ENCODE measurements at regions of chr3 and their contacts with region 1.

Region 1: DNA sequence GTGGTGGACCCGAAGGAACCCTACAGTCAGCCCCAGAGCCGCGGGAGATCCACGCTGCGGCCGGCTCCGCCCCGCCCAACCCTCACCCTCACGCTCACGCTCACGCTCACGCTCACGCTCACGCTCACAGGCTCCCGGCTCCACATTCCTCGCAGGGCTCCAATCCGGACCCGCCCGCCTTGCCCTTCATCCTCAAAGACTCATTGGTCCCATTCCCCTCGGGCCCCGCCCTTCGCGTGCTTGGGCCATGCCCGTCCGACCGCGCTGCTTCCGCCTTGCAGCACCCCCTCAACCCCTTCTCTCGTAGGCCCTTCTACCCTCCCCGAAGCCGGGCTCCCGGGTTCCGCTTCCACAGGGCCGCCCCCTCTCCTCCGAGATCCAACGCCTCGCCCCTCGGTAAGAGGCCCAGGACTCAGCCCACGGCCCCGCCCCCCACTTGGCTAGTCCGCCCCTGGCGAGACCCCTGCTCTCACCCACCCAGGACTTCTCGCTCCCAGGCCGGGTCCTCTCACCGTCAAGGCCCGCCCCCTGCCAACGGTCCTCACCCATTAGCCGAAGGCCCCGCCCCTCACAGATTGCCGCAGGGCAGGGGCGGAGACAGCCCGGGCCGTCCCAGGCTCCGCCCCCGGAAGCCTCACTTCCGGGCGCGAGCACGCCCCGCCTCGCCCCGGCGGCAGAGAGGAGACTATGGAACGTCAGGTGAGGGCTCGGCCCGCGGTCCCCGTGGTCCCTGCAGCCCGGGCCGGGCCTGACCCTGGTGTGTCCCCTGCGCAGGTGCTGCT is at the start of gene APEH:
- DNase-seq: peak; percentile 98
- ATAC-seq: peak; percentile 88
- H3K4me3 ChIP-seq: peak within 1 kb of the TSS; percentile 51 to 84 (median 73)
- H3K4me3 Mint-ChIP-seq: peak within 1 kb of the TSS; percentile 99
- H3K27ac ChIP-seq: peak within 1 kb of the TSS; percentile 86 to 94
- H3K27ac Mint-ChIP-seq: peak within 1 kb of the TSS; percentile 98
- H3K4me1 ChIP-seq: peaks cover 13 to 18% of the 10 kb centered on the region in 2 donors
- H3K4me1 Mint-ChIP-seq: peaks cover 30% of the 10 kb centered on the region
- H3K27me3 ChIP-seq: no peaks in the 10 kb centered on the region
- H3K27me3 Mint-ChIP-seq: no peaks in the 10 kb centered on the region
- CTCF ChIP-seq: no peak
- total RNA-seq, gene APEH: 87.5 and 96.2 TPM in 2 replicates

Region 2: GRCh38 chr3:48966876-48967361 is 707.0 kb before region 1 on chr3:
- CTCF ChIA-PET with region 1: no interaction called
- POLR2A ChIA-PET with region 1: no interaction called
- intact Hi-C with region 1: no loop called
- DNase-seq: no peak
- ATAC-seq: no peak
- H3K4me3 ChIP-seq: no peak overlapping the region
- H3K4me3 Mint-ChIP-seq: no peak overlapping the region
- H3K27ac ChIP-seq: no peak overlapping the region
- H3K27ac Mint-ChIP-seq: no peak overlapping the region
- H3K4me1 ChIP-seq: no peaks in the 10 kb centered on the region
- H3K4me1 Mint-ChIP-seq: no peaks in the 10 kb centered on the region
- H3K27me3 ChIP-seq: no peaks in the 10 kb centered on the region
- H3K27me3 Mint-ChIP-seq: no peaks in the 10 kb centered on the region
- CTCF ChIP-seq: no peak

Region 3: DNA sequence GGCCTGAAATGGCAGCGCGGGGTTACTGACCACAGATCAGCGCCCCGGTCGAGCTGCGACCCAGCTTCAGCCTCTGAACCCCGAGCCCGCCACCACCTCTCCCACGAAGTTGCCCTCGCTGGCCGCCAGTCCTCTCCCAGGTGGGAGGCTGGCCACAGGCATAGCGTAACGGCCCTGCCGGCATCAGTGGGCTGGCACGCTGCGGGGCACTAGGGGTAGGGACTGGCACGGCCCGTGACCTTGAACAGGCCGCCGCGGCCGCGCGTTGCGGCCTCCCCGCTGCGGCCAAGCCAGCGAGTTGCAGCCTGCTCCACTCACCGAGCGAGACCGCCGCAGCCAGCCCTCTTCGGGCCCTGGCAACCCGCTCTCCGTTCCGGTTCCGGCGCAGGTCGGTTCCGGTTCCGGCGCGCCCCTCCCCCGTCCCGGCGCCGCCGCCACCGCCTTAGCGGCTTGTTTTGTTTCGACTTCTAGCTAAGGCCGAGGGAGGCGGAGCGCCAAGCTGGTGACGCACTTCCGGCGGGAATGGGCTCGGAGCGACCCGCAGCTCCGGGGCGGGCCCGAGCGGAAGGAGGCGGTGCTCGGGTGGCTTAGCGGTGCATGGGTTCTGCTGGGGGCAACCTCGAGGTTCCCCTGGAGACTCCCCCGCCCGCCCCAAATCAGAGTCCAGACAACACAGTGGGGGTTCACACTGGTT is 553.3 kb before region 1 on chr3 and contains the start of gene USP19:
- CTCF ChIA-PET with region 1: no interaction called
- POLR2A ChIA-PET with region 1: no interaction called
- intact Hi-C with region 1: loop called (anchors 5 kb)
- DNase-seq: peak; percentile 97
- ATAC-seq: peak; percentile 95
- H3K4me3 ChIP-seq: peak within 1 kb of the TSS; percentile 67 to 85 (median 74)
- H3K4me3 Mint-ChIP-seq: peak within 1 kb of the TSS; percentile 88
- H3K27ac ChIP-seq: peak within 1 kb of the TSS; percentile 82 to 92
- H3K27ac Mint-ChIP-seq: peak within 1 kb of the TSS; percentile 89
- H3K4me1 ChIP-seq: peaks cover 12 to 21% of the 10 kb centered on the region in 2 donors
- H3K4me1 Mint-ChIP-seq: peaks cover 15% of the 10 kb centered on the region
- H3K27me3 ChIP-seq: no peaks in the 10 kb centered on the region
- H3K27me3 Mint-ChIP-seq: no peaks in the 10 kb centered on the region
- CTCF ChIP-seq: no peak
- total RNA-seq, gene USP19: 87.3 and 89.9 TPM in 2 replicates

Region 4: DNA sequence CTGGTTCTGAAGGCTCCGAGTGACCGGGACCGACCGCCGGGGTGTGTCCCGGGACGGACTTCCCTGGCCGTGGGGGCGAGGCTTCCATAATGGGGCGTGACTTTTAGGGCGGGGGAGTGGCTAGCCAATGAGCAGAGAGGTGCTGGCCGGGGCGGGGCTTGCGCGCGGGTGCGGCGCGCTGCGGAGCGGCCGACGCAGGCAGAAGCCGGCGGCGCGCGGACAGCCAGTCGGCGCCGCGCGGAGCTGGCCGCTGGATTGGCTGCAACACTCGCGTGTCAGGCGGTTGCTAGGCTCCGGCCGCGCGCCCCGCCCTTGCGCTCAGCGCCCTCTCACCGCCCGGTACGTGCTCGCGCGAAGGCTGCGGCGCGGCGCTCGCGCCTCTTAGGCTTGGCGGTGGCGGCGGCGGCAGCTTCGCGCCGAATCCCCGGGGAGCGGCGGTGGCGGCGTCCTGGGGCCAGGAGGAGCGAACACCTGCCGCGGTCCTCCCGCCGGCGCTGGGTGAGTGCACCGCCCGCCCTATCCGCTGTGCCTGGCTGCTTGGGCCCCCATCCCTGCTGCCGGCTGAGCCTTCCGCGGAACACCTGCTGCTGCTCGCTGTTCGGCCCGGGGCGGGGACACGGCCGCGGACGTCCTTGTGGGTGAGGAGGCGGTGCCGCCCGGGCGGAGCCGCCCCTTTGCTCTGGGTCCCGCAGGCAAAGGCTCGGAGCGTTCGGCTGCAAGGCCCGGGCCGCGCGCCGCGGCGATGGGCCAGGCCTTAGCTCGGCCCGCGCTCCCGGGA is 203.8 kb before region 1 on chr3 and contains the start of gene DAG1:
- CTCF ChIA-PET with region 1: no interaction called
- POLR2A ChIA-PET with region 1: no interaction called
- intact Hi-C with region 1: loop called (anchors 1 kb)
- DNase-seq: peak; percentile 98
- ATAC-seq: peak; percentile 83
- H3K4me3 ChIP-seq: peak within 1 kb of the TSS; percentile 56 to 94 (median 70)
- H3K4me3 Mint-ChIP-seq: peak within 1 kb of the TSS; percentile 95
- H3K27ac ChIP-seq: peak within 1 kb of the TSS; percentile 90 to 94
- H3K27ac Mint-ChIP-seq: peak within 1 kb of the TSS; percentile 97
- H3K4me1 ChIP-seq: peaks cover 22 to 24% of the 10 kb centered on the region in 2 donors
- H3K4me1 Mint-ChIP-seq: peaks cover 21% of the 10 kb centered on the region
- H3K27me3 ChIP-seq: no peaks in the 10 kb centered on the region
- H3K27me3 Mint-ChIP-seq: no peaks in the 10 kb centered on the region
- CTCF ChIP-seq: no peak
- total RNA-seq, gene DAG1: 27.2 and 27.3 TPM in 2 replicates

Region 5: DNA sequence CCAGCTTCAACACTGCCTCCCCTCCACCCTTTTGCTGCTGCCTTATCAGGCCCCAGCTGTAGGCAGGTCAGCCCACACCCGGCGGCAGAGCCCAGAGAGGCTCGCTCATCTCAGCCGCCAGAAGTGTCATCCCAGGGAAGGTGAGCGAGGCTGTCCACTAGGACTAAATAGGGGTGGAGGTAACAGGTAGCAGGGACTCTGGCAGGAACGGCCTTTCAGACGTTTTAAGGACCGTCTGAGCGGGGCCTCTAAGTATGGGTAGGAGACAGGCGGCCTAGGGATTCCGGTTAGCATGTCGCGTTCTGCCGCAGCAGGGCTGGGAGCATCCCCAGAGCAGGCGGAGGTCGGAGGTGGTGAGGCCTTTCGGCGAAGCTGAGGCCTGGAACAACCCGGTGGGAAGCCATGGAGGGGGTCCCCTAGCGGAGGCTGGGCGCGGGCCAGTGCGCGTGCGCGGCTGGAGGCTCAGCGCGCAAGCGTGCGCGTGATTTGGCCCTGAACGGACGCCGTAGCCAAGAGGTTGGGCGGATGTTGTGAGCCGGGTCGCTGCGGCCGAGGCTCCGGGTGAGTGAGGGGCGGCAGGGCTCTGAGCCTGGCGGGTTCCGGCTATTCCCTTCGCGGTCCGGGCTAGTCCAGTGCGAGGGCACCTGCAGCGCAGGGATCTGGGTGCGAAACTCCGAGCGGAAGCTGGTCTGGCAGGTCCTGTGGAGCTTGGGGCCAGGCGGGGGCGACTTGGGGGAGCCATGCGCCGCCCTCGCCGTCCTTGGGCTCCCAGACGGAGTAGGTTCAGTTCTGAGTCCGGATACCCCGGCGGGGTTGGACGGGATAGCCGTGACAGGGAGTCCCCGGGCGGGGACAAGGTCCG is 15.4 kb after region 1 on chr3 and contains the starts of genes MST1 and RNF123:
- CTCF ChIA-PET with region 1: no interaction called
- POLR2A ChIA-PET with region 1: interaction called, 3 read pairs
- intact Hi-C with region 1: loop called (anchors 1 kb)
- DNase-seq: peak; percentile 96
- ATAC-seq: peak; percentile 82
- H3K4me3 ChIP-seq: peak within 1 kb of the TSS; percentile 44 to 99 (median 92)
- H3K4me3 Mint-ChIP-seq: peak within 1 kb of the TSS; percentile 97
- H3K27ac ChIP-seq: peak within 1 kb of the TSS; percentile 54 to 78
- H3K27ac Mint-ChIP-seq: peak within 1 kb of the TSS; percentile 95
- H3K4me1 ChIP-seq: peaks cover 16 to 38% of the 10 kb centered on the region in 2 donors
- H3K4me1 Mint-ChIP-seq: peaks cover 43% of the 10 kb centered on the region
- H3K27me3 ChIP-seq: peaks cover 0 to 13% (median 0%) of the 10 kb centered on the region in 4 experiments
- H3K27me3 Mint-ChIP-seq: peaks cover 3% of the 10 kb centered on the region
- CTCF ChIP-seq: peak; percentile 47
- total RNA-seq, gene MST1: 14.5 and 15.7 TPM in 2 replicates
- total RNA-seq, gene RNF123: 53.2 and 69.0 TPM in 2 replicates

Region 6: GRCh38 chr3:49786241-49786958 is 112.5 kb after region 1 on chr3 and contains the start of gene IP6K1:
- CTCF ChIA-PET with region 1: no interaction called
- POLR2A ChIA-PET with region 1: no interaction called
- intact Hi-C with region 1: loop called (anchors 1 kb)
- DNase-seq: peak; percentile 99
- ATAC-seq: peak; percentile 99
- H3K4me3 ChIP-seq: peak within 1 kb of the TSS; percentile 69 to 98 (median 88)
- H3K4me3 Mint-ChIP-seq: peak within 1 kb of the TSS; percentile 97
- H3K27ac ChIP-seq: peak within 1 kb of the TSS; percentile 94 to 95
- H3K27ac Mint-ChIP-seq: peak within 1 kb of the TSS; percentile 99
- H3K4me1 ChIP-seq: peaks cover 17 to 34% of the 10 kb centered on the region in 2 donors
- H3K4me1 Mint-ChIP-seq: peaks cover 26% of the 10 kb centered on the region
- H3K27me3 ChIP-seq: no peaks in the 10 kb centered on the region
- H3K27me3 Mint-ChIP-seq: no peaks in the 10 kb centered on the region
- CTCF ChIP-seq: no peak
- total RNA-seq, gene IP6K1: 73.1 and 77.8 TPM in 2 replicates

Region 7: GRCh38 chr3:49939858-49940666 is 266.2 kb after region 1 on chr3 and contains the start of gene RBM6:
- CTCF ChIA-PET with region 1: no interaction called
- POLR2A ChIA-PET with region 1: no interaction called
- intact Hi-C with region 1: loop called (anchors 1 kb)
- DNase-seq: peak; percentile 97
- ATAC-seq: peak; percentile 93
- H3K4me3 ChIP-seq: peak within 1 kb of the TSS; percentile 81 to 98 (median 90)
- H3K4me3 Mint-ChIP-seq: peak within 1 kb of the TSS; percentile 99
- H3K27ac ChIP-seq: peak within 1 kb of the TSS; percentile 89 to 95
- H3K27ac Mint-ChIP-seq: peak within 1 kb of the TSS; percentile 100
- H3K4me1 ChIP-seq: peaks cover 23 to 32% of the 10 kb centered on the region in 2 donors
- H3K4me1 Mint-ChIP-seq: peaks cover 36% of the 10 kb centered on the region
- H3K27me3 ChIP-seq: no peaks in the 10 kb centered on the region
- H3K27me3 Mint-ChIP-seq: no peaks in the 10 kb centered on the region
- CTCF ChIP-seq: no peak
- total RNA-seq, gene RBM6: 285 and 300 TPM in 2 replicates